ENCODE measurements at regions of chr17 and their contacts with region 1.

Region 1: GRCh38 chr17:44324571-44325275 is at the start of gene SLC25A39:
- DNase-seq: peak; percentile 94
- CTCF ChIP-seq: no peak

Region 2: GRCh38 chr17:44344939-44345453 is 20.3 kb after region 1 on chr17 and contains the start of gene GRN:
- CTCF ChIA-PET with region 1: interaction called, 250 read pairs
- POLR2A ChIA-PET with region 1: interaction called, 3 read pairs
- DNase-seq: peak; percentile 94
- CTCF ChIP-seq: no peak